Thyroid gland (tissue), 4 donors: ENCODE measurements at regions of chr12 and their contacts with region 1.

Region 1: DNA sequence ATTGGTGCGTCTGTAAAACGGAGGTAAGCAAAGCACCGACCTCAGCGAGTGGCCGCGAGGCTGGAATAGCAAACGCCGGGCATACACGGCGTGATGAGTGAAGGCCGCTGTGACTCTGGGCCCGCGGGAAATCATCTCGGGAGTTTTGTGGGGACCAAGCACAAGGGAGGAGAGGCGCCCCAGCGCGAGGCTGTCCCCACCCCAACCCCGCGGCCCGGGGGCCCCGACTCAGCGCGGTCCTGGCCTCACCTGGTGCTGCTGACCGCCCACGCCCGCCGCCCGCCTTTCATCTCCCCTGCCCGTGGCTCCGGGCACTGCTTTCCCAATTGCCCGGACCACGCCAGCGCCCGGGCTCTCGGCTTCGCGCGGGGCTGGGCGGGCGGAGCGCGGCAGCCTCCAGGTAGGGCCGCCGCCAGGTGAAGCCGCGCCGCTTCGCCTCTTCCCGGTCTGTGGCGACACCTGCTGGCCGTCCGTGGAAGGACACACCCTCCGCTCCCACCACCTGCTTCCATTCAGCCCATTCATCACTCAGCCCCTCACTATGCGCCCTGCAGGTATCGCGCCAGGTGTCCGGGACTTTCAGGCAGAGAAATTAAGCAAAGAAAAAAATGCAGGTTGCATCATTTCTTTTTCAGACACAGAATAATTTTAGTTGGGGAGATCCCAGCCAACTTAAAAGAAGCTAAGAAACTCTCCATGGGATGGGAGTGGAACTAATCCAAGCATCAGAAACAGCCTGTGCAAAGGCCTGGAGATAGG is 360.4 kb downstream of the MED13L start:
- DNase-seq: peak; percentile 70 to 78
- H3K4me3 ChIP-seq: peak overlapping the region in 1 of 3 donors; percentile 14
- H3K27ac ChIP-seq: no peak overlapping the region
- H3K4me1 ChIP-seq: peaks cover 0 to 4% of the 10 kb centered on the region in 2 donors
- H3K27me3 ChIP-seq: no peaks in the 10 kb centered on the region
- CTCF ChIP-seq: peak; percentile 86 to 98 (median 96)
- POLR2A ChIP-seq: no peak

Region 2: GRCh38 chr12:114625294-114625851 is 1291.7 kb before region 1 on chr12:
- intact Hi-C with region 1: loop called (anchors 10 kb)
- DNase-seq: peak; percentile 62 to 74
- H3K4me3 ChIP-seq: no peak overlapping the region
- H3K27ac ChIP-seq: no peak overlapping the region
- H3K4me1 ChIP-seq: no peaks in the 10 kb centered on the region
- H3K27me3 ChIP-seq: no peaks in the 10 kb centered on the region
- CTCF ChIP-seq: peak; percentile 43 to 83 (median 72)
- POLR2A ChIP-seq: no peak

Region 3: DNA sequence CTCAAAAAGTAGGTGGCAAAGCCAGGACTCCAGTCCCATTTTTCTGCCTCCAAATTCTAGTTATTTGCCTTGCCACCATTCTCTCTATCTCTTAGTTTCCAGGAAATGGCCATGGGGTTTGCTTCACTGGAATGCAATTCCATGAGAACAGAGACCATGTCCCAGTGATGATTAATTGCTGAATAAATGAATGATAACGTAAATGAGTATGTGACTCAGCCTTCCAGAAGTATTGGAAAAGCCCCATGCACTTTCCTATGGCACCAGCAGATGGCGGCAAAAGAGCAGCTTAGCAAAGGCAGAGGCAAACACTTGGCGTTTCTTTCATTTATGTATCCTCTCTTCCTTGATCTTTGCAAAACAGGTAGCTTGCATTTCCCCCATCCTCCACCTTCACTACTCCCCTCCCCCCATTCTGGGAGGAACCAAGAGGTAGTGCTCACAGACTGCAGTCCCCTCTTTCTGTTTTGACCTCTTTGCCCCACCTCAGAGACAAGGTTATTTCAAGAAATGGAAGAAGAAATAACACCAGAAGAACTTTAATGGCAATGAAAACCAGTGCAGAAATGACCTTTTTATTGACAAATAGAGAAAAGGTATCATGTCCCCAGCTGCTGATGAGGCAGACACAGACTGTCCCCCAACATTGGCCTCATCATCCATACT is 1254.4 kb before region 1 on chr12:
- intact Hi-C with region 1: loop called (anchors 5 kb)
- DNase-seq: peak; percentile 93 to 94
- H3K4me3 ChIP-seq: no peak overlapping the region
- H3K27ac ChIP-seq: peak overlapping the region; percentile 92 to 99 (median 99)
- H3K4me1 ChIP-seq: peaks cover 9 to 26% of the 10 kb centered on the region in 2 donors
- H3K27me3 ChIP-seq: no peaks in the 10 kb centered on the region
- CTCF ChIP-seq: peak; percentile 74 to 98 (median 95)
- POLR2A ChIP-seq: peak in 1 of 2 donors; percentile 34

Region 4: GRCh38 chr12:115857160-115857922 is 59.7 kb before region 1 on chr12:
- intact Hi-C with region 1: no loop called
- DNase-seq: no peak
- H3K4me3 ChIP-seq: no peak overlapping the region
- H3K27ac ChIP-seq: no peak overlapping the region
- H3K4me1 ChIP-seq: no peaks in the 10 kb centered on the region
- H3K27me3 ChIP-seq: no peaks in the 10 kb centered on the region
- CTCF ChIP-seq: no peak
- POLR2A ChIP-seq: no peak